ENCODE measurements at regions of chr14 and their contacts with region 1.

Region 1: DNA sequence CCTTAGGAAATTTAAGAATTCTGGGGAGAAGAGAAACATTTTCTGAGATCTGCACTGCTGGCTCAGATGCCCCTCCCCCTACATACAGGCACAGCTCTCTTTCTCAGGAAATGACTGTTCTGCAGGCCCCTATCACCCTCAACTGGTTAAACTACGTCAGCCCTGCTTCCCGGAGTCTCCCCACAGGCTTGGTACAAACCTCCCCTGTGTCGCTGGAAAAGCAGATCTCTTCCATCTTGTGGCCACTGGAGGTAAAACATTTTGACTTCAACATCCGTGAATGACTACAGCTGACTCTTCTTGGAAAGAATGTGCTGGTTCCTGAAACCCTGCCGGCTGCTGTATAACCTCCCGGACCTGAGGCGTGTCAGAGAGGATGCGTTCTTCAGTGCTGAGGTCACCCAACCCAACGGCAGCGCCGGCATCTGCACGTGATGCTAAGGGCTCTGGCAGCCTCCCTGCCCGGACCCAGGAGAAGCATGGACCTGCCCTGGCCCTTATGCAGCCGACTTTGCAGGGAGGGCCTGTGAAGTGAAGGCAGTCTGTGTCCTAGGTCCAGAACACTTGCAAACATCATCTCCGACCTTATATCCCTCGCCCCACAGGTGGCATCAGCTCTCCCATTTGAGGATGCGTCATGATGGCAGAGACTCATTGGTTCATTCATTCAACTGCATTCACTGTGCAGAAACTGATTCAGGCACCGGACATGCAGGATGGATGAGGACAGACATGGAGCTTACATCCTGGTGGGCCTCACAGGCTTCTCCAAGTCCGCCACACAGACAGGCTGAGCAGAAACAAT is 129.3 kb downstream of the GCH1 start:
- DNase-seq: peak; percentile 95
- H3K4me3 Mint-ChIP-seq: peak overlapping the region; percentile 44
- H3K27ac Mint-ChIP-seq: peak overlapping the region; percentile 84
- H3K4me1 Mint-ChIP-seq: peaks cover 51% of the 10 kb centered on the region
- H3K27me3 Mint-ChIP-seq: no peaks in the 10 kb centered on the region

Region 2: GRCh38 chr14:54440873-54441868 is 332.2 kb before region 1 on chr14 and contains the start of gene CNIH1:
- CTCF ChIA-PET with region 1: no interaction called
- intact Hi-C with region 1: loop called (anchors 1 kb)
- DNase-seq: peak; percentile 93
- H3K4me3 Mint-ChIP-seq: peak within 1 kb of the TSS; percentile 87
- H3K27ac Mint-ChIP-seq: peak within 1 kb of the TSS; percentile 97
- H3K4me1 Mint-ChIP-seq: peaks cover 48% of the 10 kb centered on the region
- H3K27me3 Mint-ChIP-seq: no peaks in the 10 kb centered on the region
- total RNA-seq, gene CNIH1: 68.1 to 78.4 TPM

Region 3: DNA sequence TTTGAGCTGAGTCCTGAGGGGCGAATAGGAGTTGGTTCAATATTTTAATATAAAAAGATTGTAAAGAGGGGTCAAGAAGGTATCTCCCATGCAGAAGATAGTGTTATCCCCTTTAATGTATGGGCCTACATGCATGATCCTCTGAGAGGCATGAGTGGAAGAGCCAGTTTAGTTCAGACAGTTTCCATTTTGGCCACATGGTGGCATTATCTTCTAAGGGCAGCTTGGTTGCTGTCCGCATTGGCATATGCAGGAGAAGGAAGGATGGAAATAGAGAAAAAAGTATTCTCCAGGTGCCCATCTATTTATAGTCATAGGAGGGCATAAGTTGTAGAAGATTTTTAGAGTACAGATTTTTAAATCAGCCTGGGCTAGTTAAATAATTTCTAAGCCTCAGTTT is 201.1 kb before region 1 on chr14:
- CTCF ChIA-PET with region 1: interaction called, 217 read pairs
- intact Hi-C with region 1: no loop called
- DNase-seq: peak; percentile 49
- H3K4me3 Mint-ChIP-seq: no peak overlapping the region
- H3K27ac Mint-ChIP-seq: no peak overlapping the region
- H3K4me1 Mint-ChIP-seq: peaks cover 19% of the 10 kb centered on the region
- H3K27me3 Mint-ChIP-seq: peaks cover 3% of the 10 kb centered on the region

Region 4: DNA sequence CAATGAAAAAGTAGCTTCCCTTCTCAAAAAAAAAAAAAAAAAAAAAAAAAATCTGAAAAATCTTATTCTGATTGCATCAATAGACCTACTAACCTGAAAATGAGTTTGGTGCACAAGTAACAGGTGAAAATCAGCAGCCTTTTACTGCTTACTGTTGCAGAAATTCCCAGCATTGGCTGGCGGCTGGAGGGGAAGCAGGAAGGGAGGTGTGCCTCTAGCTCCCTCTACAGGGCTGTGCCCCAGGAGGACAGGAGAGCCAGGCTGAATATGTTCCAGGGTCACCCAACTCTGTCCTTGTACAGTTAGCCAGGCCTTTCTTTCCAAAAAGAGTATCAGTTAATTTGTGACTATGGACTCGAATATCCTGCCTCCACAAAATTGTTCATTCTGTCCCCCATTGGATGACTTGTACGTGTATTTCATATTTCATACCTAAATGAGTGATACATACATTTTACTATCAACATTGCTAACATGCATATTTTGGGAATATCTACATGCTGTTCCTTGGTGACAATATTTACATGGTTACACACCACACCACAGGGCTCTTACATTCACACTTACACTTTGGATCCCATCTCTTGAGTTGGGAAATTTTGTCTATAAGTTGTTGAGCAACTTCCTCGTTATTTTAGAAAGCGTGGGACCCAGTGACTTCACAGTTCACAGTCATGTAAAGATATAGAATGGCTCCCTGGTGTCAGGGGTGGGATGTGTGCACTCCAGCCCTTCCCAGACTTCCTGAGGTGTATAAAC is 81.7 kb before region 1 on chr14:
- CTCF ChIA-PET with region 1: interaction called, 33 read pairs
- intact Hi-C with region 1: loop called (anchors 1 kb)
- DNase-seq: peak; percentile 80
- H3K4me3 Mint-ChIP-seq: no peak overlapping the region
- H3K27ac Mint-ChIP-seq: no peak overlapping the region
- H3K4me1 Mint-ChIP-seq: peaks cover 15% of the 10 kb centered on the region
- H3K27me3 Mint-ChIP-seq: no peaks in the 10 kb centered on the region

Region 5: DNA sequence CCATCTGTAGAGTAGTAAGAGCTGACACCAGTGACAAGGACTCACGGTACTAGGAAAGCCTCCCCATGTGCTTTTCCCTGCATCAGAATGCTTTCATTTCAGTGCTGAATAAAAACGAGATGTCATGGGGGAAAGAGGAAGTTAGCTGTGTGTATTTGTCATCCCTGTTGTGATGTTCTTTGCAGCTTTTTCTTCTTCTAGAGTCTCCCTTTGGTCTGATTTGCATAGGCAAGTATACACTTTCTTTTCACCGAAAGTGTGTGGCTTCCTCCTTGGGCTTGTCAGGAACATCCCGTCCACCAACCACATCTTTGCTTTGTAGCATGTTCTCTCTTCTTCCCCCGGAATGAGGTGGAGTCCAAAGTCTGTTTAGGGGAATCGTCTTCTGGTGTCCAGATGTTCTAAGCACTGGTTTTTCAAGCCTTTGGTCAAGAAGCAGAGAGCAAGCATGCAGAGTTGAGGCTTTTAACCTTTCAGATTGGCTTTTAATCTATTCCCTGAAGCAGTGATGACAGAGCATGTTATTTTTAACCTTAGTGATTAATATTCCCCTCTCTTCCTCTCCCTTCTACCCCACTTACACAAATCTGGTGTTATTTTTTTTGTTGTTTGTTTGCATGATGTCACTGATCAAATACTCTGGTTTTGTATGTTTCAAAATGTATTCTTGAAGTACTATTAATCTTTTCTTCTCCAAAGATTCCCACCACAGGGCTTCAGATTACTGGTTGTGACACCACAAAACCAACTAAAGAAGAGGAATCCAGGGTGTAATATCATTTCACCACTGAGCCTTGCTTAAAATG is 43.0 kb before region 1 on chr14:
- CTCF ChIA-PET with region 1: interaction called, 27 read pairs
- intact Hi-C with region 1: loop called (anchors 1 kb)
- DNase-seq: peak; percentile 74
- H3K4me3 Mint-ChIP-seq: peak overlapping the region; percentile 58
- H3K27ac Mint-ChIP-seq: peak overlapping the region; percentile 96
- H3K4me1 Mint-ChIP-seq: peaks cover 33% of the 10 kb centered on the region
- H3K27me3 Mint-ChIP-seq: peaks cover 3% of the 10 kb centered on the region

Region 6: DNA sequence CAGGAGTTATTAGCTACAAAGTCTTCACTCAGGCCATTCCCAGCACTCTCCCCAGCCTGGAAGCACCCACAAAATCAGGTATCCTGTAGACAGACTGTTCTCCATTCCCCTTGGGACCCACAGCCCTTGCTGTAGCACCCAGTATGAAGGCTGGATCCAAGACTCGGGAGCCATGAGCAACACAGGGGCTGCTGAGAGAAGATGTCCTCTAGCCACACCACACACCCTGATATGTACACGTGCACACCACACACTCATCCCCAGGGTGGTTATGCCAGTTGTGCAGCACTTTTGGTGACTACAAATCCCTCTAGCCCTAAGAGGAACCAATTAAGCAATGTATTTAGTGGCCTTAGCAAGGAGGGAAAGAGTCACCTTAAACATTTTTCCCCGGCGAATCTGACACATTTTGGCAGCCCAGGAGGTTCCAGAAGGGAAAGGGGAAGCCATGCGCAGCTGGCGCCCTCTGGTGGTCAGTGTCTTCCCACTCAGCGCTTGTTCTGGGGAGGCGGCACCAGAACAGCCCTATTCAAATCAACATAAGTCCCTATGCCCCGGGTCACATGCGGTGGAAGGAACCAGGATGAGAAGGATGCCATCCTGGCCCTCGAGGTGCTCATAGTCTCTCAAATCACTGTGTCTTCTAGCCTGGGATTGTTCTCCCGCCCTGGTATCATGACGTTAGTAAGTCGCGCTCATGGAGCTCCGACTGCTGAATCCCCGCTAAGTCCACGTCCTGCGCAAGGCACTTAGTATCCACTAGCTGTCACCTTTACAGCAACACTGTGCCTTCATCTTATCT is 32.3 kb after region 1 on chr14:
- CTCF ChIA-PET with region 1: interaction called, 65 read pairs
- intact Hi-C with region 1: loop called (anchors 1 kb)
- DNase-seq: peak; percentile 90
- H3K4me3 Mint-ChIP-seq: peak overlapping the region; percentile 6
- H3K27ac Mint-ChIP-seq: no peak overlapping the region
- H3K4me1 Mint-ChIP-seq: peaks cover 6% of the 10 kb centered on the region
- H3K27me3 Mint-ChIP-seq: peaks cover 11% of the 10 kb centered on the region

Measured in activated naive CD4-positive, alpha-beta T cell treated with anti-CD3 and anti-CD28 coated beads for 36 hours (primary cell).